Activated naive CD4-positive, alpha-beta T cell treated with anti-CD3 and anti-CD28 coated beads, Interleukin-2, amount 10 ng/mL, durations not matched to agents 7 days and 5 days (primary cell): ENCODE measurements at regions of chr18 and their contacts with region 1.

Region 1: DNA sequence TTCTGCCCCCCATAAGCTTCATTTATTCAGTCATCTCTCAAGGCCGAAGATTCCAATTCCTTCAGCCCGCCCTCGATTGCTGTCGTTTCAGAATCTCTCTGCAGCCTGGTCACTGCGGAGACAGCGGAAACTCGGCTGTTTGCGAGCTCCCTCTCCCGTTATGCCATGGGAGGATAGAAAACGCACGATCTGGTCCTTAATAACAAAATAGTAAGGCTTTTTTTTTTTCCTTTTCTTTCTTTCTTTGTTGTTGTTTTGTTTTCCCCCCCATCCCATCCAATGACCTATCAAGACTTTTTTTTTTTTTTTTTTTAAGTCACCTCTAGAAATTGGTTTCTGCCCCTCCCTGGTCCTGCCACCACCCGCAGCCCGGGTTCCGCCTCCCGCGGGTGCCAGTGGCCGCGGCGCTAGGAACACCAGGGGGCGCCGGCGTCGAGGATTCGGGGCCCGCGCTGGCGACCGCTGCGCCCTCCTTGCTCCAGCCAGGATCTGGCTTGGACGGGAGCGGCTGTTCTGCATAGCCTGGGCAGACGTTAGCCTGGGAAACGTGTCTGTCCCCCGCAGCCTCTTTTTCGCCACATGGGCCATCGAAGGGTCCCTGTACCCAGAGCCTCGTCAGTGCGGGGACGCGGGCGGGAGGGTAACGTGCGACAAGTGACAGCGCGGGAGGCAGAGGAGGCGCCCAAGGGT is 10.1 kb downstream of the CPLX4 start:
- DNase-seq: peak; percentile 73
- H3K4me3 Mint-ChIP-seq: peak overlapping the region; percentile 31
- H3K27ac Mint-ChIP-seq: no peak overlapping the region
- H3K4me1 Mint-ChIP-seq: no peaks in the 10 kb centered on the region
- H3K27me3 Mint-ChIP-seq: peaks cover 51% of the 10 kb centered on the region

Region 2: GRCh38 chr18:59249205-59249774 is 59.1 kb before region 1 on chr18:
- CTCF ChIA-PET with region 1: interaction called, 23 read pairs
- DNase-seq: peak; percentile 57
- H3K4me3 Mint-ChIP-seq: no peak overlapping the region
- H3K27ac Mint-ChIP-seq: no peak overlapping the region
- H3K4me1 Mint-ChIP-seq: no peaks in the 10 kb centered on the region
- H3K27me3 Mint-ChIP-seq: peaks cover 19% of the 10 kb centered on the region

Region 3: DNA sequence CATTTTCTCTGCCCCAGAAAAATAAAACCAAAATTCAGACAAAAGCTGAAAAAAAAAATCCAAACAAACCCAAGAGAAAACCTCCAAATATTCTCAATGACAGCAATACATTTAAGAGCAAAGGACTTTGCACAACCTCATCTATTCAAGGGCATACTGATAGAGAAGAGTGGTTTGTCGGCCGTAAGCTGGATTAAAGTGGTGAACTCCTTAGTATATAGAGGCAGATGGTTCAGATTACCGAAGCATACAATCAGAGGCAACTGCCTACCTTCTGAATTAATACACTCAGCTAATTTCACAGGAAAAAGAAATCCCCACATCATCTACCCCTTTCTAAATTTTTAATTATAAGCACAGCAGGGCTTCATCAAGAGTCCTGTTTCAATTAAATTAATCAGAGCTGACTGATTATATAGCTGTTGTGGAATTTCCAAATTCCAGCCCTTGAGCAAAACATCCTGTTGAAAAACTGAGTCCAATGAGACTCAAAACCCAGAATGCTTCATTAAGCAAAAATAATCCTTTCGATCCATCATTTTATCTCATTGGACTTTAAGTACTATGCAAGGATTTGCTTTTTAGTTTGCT is 10.2 kb after region 1 on chr18 and contains the start of gene CPLX4:
- CTCF ChIA-PET with region 1: interaction called, 10 read pairs
- DNase-seq: no peak
- H3K4me3 Mint-ChIP-seq: no peak within 1 kb of the TSS
- H3K27ac Mint-ChIP-seq: no peak within 1 kb of the TSS
- H3K4me1 Mint-ChIP-seq: no peaks in the 10 kb centered on the region
- H3K27me3 Mint-ChIP-seq: peaks cover 17% of the 10 kb centered on the region